ENCODE measurements at regions of chr1 and their contacts with region 1.

Region 1: GRCh38 chr1:78237364-78237916 is 191.7 kb downstream of the GIPC2 start:
- DNase-seq: peak; percentile 60 to 97
- H3K4me3 ChIP-seq: no peak overlapping the region; the same call in 1 of the 2 replicates
- H3K27ac ChIP-seq: peak overlapping the region; percentile 75
- H3K4me1 ChIP-seq: peaks cover 24% of the 10 kb centered on the region
- H3K27me3 ChIP-seq: no peaks in the 10 kb centered on the region
- CTCF ChIP-seq: no peak

Region 2: DNA sequence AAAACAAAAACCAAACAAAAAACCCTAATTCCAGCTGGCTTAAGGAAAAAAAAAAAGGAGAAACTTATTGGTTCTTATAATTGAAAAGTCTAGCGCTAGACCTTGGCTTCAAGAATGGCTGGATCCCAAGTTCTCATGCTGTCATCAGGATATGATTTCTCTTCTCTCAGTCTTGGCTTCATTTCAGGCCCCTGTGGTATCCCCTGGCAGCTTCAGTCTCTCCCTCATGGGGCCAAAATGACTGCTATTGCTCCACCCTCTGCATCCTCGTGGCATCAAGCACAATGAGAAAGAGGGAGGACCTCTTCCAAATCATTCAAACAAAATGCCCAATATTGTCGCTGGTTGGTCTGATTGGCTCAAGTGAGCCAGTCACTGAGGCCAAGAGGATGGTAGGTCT is 110.9 kb before region 1 on chr1:
- CTCF ChIA-PET with region 1: no interaction called
- POLR2A ChIA-PET with region 1: no interaction called
- intact Hi-C with region 1: no loop called
- DNase-seq: no peak
- H3K4me3 ChIP-seq: no peak overlapping the region
- H3K27ac ChIP-seq: no peak overlapping the region
- H3K4me1 ChIP-seq: no peaks in the 10 kb centered on the region
- H3K27me3 ChIP-seq: no peaks in the 10 kb centered on the region
- CTCF ChIP-seq: no peak

Region 3: DNA sequence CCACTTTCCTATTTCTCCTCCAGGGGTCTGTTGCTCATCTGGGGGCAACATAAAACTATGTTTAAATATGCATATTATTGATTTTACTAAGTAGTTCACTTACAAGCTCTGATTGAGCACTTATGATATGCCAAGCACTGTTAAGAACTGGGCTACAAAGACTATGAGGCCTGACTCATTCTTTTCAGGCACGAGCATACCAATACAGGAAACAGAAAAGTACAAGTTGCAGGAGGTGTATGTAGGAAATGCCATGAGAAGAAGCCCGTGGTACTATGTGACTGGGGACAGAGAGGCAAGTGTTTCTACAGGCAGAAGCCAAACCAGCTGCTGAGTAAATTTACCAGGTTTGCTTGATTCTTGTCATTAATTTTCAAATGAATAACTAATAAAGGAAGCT is 132.9 kb after region 1 on chr1:
- CTCF ChIA-PET with region 1: no interaction called
- POLR2A ChIA-PET with region 1: no interaction called
- intact Hi-C with region 1: no loop called
- DNase-seq: no peak
- H3K4me3 ChIP-seq: no peak overlapping the region
- H3K27ac ChIP-seq: no peak overlapping the region
- H3K4me1 ChIP-seq: no peaks in the 10 kb centered on the region
- H3K27me3 ChIP-seq: no peaks in the 10 kb centered on the region
- CTCF ChIP-seq: no peak

Region 4: DNA sequence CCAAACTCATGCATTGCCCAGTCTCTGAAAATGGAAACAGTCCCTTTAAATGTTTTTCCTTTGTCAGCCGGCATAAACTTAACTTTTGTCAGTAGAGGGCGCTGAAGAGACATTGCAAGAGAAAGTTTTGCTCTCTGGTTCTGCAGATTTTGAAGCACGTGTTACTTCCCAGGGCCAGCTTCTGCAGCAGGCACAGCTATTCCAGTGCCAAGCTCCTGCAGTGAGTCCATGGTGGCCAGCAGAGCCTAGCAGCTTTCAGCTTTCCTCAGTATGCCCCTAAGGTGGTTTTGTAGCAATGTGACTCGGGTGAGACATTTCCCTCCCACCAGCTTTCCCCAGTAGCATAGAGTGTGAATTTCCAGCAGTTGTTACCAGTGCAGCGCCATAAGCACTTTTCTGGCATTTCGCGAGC is 380.2 kb after region 1 on chr1:
- CTCF ChIA-PET with region 1: no interaction called
- POLR2A ChIA-PET with region 1: interaction called, 21 read pairs
- intact Hi-C with region 1: no loop called
- DNase-seq: peak; percentile 31 to 53
- H3K4me3 ChIP-seq: no peak overlapping the region
- H3K27ac ChIP-seq: no peak overlapping the region
- H3K4me1 ChIP-seq: peaks cover 13% of the 10 kb centered on the region
- H3K27me3 ChIP-seq: no peaks in the 10 kb centered on the region
- CTCF ChIP-seq: peak; percentile 83

Measured in PC-9 (cell line).